ENCODE measurements at regions of chr4 and their contacts with region 1.

Region 1: GRCh38 chr4:146458594-146458993 is 63.1 kb downstream of the SLC10A7 start:
- DNase-seq: no peak
- H3K4me3 Mint-ChIP-seq: peak overlapping the region; percentile 63
- H3K27ac Mint-ChIP-seq: peak overlapping the region; percentile 88
- H3K4me1 Mint-ChIP-seq: peaks cover 26% of the 10 kb centered on the region
- H3K27me3 Mint-ChIP-seq: no peaks in the 10 kb centered on the region

Region 2: GRCh38 chr4:145481164-145481941 is 977.2 kb before region 1 on chr4 and contains the start of gene SMAD1:
- intact Hi-C with region 1: loop called (anchors 5 kb)
- DNase-seq: peak; percentile 11
- H3K4me3 Mint-ChIP-seq: peak within 1 kb of the TSS; percentile 73
- H3K27ac Mint-ChIP-seq: peak within 1 kb of the TSS; percentile 49
- H3K4me1 Mint-ChIP-seq: peaks cover 6% of the 10 kb centered on the region
- H3K27me3 Mint-ChIP-seq: peaks cover 33% of the 10 kb centered on the region
- total RNA-seq, gene SMAD1: 3.1 and 3.2 TPM in 2 replicates

Region 3: GRCh38 chr4:146175541-146176453 is 282.8 kb before region 1 on chr4 and contains the start of gene LSM6:
- intact Hi-C with region 1: loop called (anchors 5 kb)
- DNase-seq: peak; percentile 77
- H3K4me3 Mint-ChIP-seq: peak within 1 kb of the TSS; percentile 88
- H3K27ac Mint-ChIP-seq: peak within 1 kb of the TSS; percentile 81
- H3K4me1 Mint-ChIP-seq: peaks cover 40% of the 10 kb centered on the region
- H3K27me3 Mint-ChIP-seq: no peaks in the 10 kb centered on the region
- total RNA-seq, gene LSM6: 62.9 and 65.0 TPM in 2 replicates

Region 4: DNA sequence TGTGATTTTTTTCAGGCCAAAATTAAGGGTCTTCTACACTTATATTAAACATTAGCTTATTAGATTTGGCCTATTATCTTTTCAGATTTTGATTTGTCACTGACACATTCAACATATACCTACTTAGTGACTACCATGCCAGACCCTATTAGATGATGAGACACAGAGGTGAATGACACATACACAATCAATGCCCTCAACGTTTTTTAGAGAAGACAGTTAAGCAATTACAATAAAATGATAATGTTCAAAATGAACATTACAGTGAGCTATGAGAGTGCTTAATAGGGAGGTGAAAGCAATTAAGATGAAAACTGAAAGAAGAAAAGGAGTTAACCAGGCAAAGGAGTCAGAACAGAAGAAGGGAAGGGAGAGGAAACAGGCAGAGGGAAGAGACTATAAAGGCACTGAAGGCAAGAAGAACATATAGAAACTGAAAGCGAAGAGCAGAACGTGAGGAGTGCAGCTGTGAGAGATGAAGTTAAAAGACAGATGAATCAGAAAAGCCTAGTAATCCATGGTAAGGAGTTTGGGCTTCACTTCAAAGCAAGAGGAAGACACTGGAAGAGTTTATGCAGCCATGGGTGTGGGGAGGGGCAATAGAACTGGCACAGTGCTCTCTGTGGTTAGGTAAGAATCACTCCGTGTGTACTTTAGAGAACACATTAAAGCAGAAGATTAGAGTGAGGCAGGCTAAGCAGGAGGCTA is 125.3 kb before region 1 on chr4:
- intact Hi-C with region 1: loop called (anchors 2 kb)
- DNase-seq: peak; percentile 1
- H3K4me3 Mint-ChIP-seq: no peak overlapping the region
- H3K27ac Mint-ChIP-seq: no peak overlapping the region
- H3K4me1 Mint-ChIP-seq: no peaks in the 10 kb centered on the region
- H3K27me3 Mint-ChIP-seq: no peaks in the 10 kb centered on the region

Region 5: GRCh38 chr4:146486565-146486964 is 28.0 kb after region 1 on chr4:
- intact Hi-C with region 1: loop called (anchors 1 kb)
- DNase-seq: no peak
- H3K4me3 Mint-ChIP-seq: no peak overlapping the region
- H3K27ac Mint-ChIP-seq: no peak overlapping the region
- H3K4me1 Mint-ChIP-seq: peaks cover 17% of the 10 kb centered on the region
- H3K27me3 Mint-ChIP-seq: no peaks in the 10 kb centered on the region